K562 (cell line): ENCODE measurements at regions of chr2 and their contacts with region 1.

Region 1: DNA sequence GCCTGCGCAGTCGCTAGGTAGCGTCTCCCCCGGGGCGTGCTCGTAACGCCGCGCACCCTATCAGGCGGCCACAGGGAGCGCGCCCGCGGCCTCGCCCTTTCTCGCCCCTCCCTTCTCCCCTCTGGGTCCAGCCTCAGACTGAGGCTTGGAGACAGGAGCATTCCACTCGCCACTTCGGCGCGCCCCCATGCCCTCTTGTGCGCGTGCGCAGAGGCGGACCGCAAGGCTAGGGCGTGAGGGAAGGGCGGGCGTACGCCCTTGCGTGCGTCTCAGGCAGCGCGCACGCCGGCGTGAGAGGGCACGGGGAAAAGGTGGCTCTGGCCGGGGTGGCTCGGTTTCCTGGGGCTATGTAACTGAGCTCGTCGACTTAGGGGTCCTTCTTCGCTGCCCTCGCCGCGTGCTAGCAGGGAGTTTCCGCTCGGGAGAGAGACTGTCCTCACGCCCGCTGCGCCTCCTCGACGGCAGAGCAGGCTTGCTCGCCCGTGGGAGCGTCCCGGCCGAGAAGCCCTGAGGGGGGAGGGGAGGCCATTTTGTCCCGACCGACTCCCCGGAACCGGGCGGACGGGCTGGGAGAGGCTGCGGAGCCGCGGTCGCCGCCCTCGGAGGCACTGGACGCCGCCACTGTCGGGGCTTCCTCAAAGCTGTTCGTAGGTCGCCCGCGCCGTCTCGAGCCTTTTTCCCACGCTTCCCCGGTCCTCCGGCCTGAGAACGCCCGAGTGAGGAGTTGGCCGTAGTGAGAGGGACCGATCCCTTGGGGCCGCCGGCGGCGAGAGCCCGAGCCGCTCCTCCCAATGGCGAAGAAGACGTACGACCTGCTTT is at the start of gene RAB10:
- DNase-seq: peak; percentile 99 to 100 (median 99)
- ATAC-seq: peak; percentile 88
- H3K4me3 ChIP-seq: peak within 1 kb of the TSS; percentile 85
- H3K27ac ChIP-seq: peak within 1 kb of the TSS; percentile 97
- H3K4me1 ChIP-seq: peaks cover 7 to 23% of the 10 kb centered on the region in 2 experiments; a peak in 4 of 5 replicates
- H3K27me3 ChIP-seq: no peaks in the 10 kb centered on the region; a peak in 1 of 5 replicates
- CTCF ChIP-seq: no peak
- EP300 ChIP-seq: no peak
- POLR2A ChIP-seq: peak; percentile 97
- RAD21 ChIP-seq: peak; percentile 7 to 19; a peak in 1 of 4 replicates
- polyA plus RNA-seq, gene RAB10: 25.1 to 35.7 TPM

Region 2: GRCh38 chr2:25939257-25939668 is 94.8 kb before region 1 on chr2:
- CTCF ChIA-PET with region 1: no interaction called
- POLR2A ChIA-PET with region 1: no interaction called
- in situ Hi-C with region 1: no loop called
- intact Hi-C with region 1: no loop called
- DNase-seq: peak in 1 of 4 experiments; percentile 3
- ATAC-seq: no peak
- H3K4me3 ChIP-seq: no peak overlapping the region
- H3K27ac ChIP-seq: no peak overlapping the region
- H3K4me1 ChIP-seq: no peaks in the 10 kb centered on the region; a peak in 1 of 5 replicates
- H3K27me3 ChIP-seq: no peaks in the 10 kb centered on the region
- CTCF ChIP-seq: no peak
- EP300 ChIP-seq: no peak
- POLR2A ChIP-seq: no peak
- RAD21 ChIP-seq: no peak

Region 3: DNA sequence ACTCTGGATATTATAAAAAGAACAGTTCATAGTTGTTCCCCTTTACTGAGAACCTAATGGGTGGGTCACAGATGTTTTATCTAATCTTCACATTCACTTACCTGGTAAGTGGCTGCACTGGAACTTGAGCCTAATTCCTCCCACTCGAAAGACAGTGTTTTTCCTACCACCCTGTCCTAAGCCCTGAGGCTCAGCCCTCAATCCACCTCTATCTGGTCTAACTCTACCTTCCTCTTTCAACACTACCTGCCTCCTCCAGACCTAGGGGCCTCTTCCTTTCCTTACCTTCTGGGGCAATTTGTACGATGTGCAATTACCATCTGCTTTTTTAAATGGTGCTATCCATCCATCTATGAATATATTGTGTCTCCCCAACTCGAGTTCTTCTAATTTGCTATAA is 42.1 kb before region 1 on chr2:
- CTCF ChIA-PET with region 1: no interaction called
- POLR2A ChIA-PET with region 1: no interaction called
- in situ Hi-C with region 1: no loop called
- intact Hi-C with region 1: loop called (anchors 5 kb)
- DNase-seq: peak in 1 of 4 experiments; percentile 21
- ATAC-seq: peak; percentile 72
- H3K4me3 ChIP-seq: no peak overlapping the region
- H3K27ac ChIP-seq: no peak overlapping the region
- H3K4me1 ChIP-seq: peaks cover 0 to 8% of the 10 kb centered on the region in 2 experiments; a peak in 3 of 5 replicates
- H3K27me3 ChIP-seq: no peaks in the 10 kb centered on the region
- CTCF ChIP-seq: no peak
- EP300 ChIP-seq: no peak
- POLR2A ChIP-seq: no peak
- RAD21 ChIP-seq: no peak

Region 4: DNA sequence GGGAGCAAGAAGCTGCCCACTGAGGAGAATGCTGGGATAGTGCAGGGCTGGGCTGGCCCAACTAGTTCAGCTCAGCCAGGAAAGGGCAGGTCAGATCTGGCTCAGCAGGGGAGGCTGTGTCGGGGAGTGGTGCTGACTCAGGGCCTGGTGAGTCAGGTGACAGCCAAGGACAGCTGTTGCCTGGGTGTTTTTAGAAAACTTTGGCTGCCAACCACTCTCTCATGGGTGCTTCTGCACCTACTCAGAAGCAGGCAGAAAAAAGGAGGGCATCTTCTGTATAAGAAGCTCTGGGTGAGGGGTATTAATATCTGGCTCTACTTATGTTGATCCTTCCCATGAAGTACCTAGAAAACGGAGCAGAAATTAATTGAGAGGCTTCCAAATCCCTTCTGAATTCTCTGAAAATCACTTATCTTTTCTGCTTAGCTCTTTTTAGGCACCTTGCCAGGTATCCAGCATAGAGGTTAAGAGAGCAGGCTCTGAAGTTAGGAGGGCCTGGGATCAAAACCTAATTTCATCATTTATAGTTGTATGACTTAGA is 15.8 kb before region 1 on chr2:
- CTCF ChIA-PET with region 1: no interaction called
- POLR2A ChIA-PET with region 1: interaction called, 19 read pairs
- in situ Hi-C with region 1: no loop called
- intact Hi-C with region 1: no loop called
- DNase-seq: peak; percentile 78 to 86 (median 82)
- ATAC-seq: peak; percentile 100
- H3K4me3 ChIP-seq: no peak overlapping the region
- H3K27ac ChIP-seq: peak overlapping the region; percentile 41; the same call in 1 of the 3 replicates
- H3K4me1 ChIP-seq: peaks cover 10 to 16% of the 10 kb centered on the region in 2 experiments; a peak in 4 of 5 replicates
- H3K27me3 ChIP-seq: no peaks in the 10 kb centered on the region
- CTCF ChIP-seq: no peak
- EP300 ChIP-seq: no peak
- POLR2A ChIP-seq: no peak
- RAD21 ChIP-seq: 0 out of 4 replicates have a peak, but pooled peaks of 1 of the 2 experiments have one; percentile 13

Region 5: DNA sequence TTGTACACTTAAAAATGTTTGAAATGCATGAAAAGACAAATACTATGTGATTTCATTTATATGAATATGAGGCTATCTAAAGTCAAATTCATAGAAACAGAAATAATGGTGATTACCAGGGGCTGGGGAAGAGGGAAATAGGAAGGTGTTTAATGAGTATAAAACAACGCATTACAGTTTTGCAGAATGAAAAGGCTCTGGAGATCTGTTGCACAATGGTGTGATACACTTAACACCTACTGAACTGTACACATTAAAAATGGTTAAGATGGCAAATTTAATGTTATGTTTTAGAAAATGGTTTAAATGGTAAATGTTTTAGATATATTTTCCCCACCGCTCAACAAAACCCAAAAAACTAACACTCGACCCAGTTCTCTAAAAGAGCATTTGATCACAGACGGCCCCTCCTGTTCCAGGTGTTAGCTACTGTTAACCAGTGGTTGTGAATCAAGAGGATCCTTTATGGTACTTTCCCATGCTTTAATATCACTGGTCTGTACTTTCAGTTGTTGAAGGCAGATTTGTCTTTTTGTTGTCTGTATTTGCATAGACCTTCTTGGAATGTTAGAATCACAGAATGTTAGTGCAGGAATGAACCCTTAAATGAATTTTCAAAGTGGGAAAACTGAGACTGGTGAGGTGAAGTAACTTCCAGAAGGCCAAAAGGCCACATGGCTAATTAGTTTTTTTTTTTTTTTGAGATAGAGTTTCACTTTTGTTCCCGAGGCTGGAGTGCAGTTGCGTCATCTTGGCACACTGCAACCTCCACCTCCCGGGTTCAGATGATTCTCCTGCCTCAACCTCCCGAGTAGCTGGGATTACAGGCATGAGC is 10.1 kb after region 1 on chr2:
- CTCF ChIA-PET with region 1: no interaction called
- POLR2A ChIA-PET with region 1: interaction called, 40 read pairs
- in situ Hi-C with region 1: no loop called
- intact Hi-C with region 1: no loop called
- DNase-seq: no peak
- ATAC-seq: peak; percentile 58
- H3K4me3 ChIP-seq: no peak overlapping the region
- H3K27ac ChIP-seq: peak overlapping the region; percentile 35; the same call in 1 of the 3 replicates
- H3K4me1 ChIP-seq: peaks cover 17 to 19% of the 10 kb centered on the region in 2 experiments
- H3K27me3 ChIP-seq: no peaks in the 10 kb centered on the region
- CTCF ChIP-seq: no peak
- EP300 ChIP-seq: no peak
- POLR2A ChIP-seq: no peak
- RAD21 ChIP-seq: no peak

Region 6: GRCh38 chr2:26068602-26069298 is 34.7 kb after region 1 on chr2:
- CTCF ChIA-PET with region 1: no interaction called
- POLR2A ChIA-PET with region 1: interaction called, 5 read pairs
- in situ Hi-C with region 1: no loop called
- intact Hi-C with region 1: loop called (anchors 2 kb)
- DNase-seq: peak; percentile 64 to 95 (median 73)
- ATAC-seq: peak; percentile 71
- H3K4me3 ChIP-seq: no peak overlapping the region; the same call in 1 of the 2 replicates
- H3K27ac ChIP-seq: peak overlapping the region; percentile 98
- H3K4me1 ChIP-seq: peaks cover 32 to 77% of the 10 kb centered on the region in 2 experiments
- H3K27me3 ChIP-seq: no peaks in the 10 kb centered on the region
- CTCF ChIP-seq: no peak
- EP300 ChIP-seq: peak; percentile 98
- POLR2A ChIP-seq: peak; percentile 49
- RAD21 ChIP-seq: 0 out of 4 replicates have a peak, but pooled peaks of 1 of the 2 experiments have one; percentile 4

Region 7: DNA sequence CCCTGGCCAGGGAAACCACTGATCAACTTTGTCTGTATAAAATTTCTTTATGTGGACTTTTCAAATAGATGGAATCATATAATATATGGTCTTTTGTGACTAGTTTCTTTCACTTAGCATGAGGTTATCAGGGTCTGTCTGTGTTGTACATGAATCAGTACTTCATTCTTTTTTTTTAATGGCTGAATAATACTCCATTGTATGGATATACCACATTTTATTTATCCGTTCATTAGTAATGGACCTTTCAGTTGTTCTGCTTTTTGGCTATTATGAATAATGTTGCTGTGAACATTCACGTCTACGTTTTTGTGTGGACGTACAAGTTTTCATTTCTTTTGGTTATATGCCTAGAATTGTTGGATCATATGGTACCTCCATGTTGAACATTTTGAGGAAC is 69.7 kb after region 1 on chr2:
- CTCF ChIA-PET with region 1: no interaction called
- POLR2A ChIA-PET with region 1: no interaction called
- in situ Hi-C with region 1: no loop called
- intact Hi-C with region 1: no loop called
- DNase-seq: no peak
- ATAC-seq: no peak
- H3K4me3 ChIP-seq: no peak overlapping the region
- H3K27ac ChIP-seq: no peak overlapping the region
- H3K4me1 ChIP-seq: no peaks in the 10 kb centered on the region
- H3K27me3 ChIP-seq: no peaks in the 10 kb centered on the region
- CTCF ChIP-seq: no peak
- EP300 ChIP-seq: no peak
- POLR2A ChIP-seq: no peak
- RAD21 ChIP-seq: no peak